Posterior cingulate gyrus (tissue), 11 donors: ENCODE measurements at regions of chr1 and their contacts with region 1.

Region 1: DNA sequence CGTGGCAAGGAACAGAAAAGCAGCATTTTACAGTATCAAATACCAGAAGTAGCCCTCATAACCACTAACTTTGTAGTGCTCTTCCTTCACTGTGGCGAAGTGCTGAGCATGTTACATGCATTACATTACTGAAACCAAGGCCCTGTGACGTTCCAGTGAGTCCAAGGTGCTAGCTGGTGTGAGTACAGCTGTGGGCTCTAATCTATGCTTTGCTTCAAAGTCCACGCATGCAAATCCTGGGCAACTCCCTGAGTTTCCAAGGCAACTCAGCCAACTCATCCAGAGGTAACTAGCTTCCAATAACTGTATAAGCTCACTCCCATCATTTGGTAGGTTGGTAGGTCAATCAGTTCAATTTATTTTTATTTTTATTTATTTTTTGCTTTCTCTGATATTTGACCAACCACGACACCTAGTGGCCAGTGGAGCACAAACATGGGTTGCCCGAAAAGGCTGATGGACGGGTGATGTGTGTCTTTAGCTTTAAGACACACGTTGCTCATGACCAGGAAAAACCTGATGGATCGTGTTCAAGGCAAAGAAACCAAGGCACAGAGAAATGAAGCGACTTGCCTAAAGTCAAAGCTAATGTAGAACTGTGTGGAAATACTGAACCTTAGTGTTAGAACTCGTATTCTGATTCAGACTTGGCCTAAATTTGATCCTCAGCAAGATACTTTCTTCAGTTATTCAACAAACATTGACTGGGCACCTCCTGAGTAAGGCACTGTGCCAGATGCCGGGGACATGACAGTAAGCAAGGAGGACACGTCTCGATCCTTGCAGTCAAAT is 73.0 kb downstream of the GNG12 start:
- DNase-seq: peak in 7 of 10 donors; percentile 40 to 85 (median 55)

Region 2: DNA sequence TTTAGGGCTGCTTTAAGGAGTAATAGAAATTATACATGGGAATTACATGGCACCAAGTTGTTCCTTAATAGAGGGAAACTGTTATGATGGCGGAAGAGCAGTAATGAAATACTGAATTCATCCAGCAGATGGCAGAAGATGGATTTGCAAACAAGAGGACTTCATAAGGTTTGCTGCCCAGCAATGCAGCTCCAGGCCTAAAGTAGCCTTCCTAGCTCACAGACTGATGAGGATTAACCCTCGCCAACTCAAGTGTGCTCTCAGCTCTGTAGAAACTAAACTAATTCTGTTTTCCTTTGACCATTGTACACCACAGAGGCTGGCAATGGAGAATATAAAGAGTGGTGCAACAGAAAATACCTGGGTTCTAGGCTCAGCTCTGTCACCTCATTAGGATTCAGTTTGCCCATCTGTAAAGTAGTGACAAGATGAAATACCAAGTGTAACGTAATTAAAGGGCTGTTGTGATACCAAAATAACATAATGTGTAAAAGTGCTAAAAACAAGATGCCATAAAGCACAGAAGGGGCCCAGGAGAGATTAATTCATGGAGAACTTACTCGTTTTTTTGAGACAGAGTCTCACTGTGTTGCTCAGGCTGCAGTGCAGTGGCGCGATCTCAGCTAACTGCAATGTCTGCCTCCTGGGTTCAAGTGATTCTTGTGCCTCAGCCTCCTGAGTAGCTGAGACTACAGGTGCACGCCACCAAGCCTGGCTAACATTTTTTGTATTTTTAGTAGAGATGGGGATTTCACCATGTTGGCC is 227.6 kb before region 1 on chr1:
- intact Hi-C with region 1: loop called (anchors 1 kb)
- DNase-seq: peak in 5 of 10 donors; percentile 7 to 83 (median 28)

Region 3: GRCh38 chr1:67561704-67562113 is 198.5 kb before region 1 on chr1:
- intact Hi-C with region 1: no loop called
- DNase-seq: peak; percentile 50 to 94 (median 77)

Region 4: GRCh38 chr1:67685067-67685557 is 75.1 kb before region 1 on chr1 and contains the start of gene GADD45A:
- intact Hi-C with region 1: loop called (anchors 2 kb)
- DNase-seq: peak; percentile 94 to 99 (median 97)

Region 5: DNA sequence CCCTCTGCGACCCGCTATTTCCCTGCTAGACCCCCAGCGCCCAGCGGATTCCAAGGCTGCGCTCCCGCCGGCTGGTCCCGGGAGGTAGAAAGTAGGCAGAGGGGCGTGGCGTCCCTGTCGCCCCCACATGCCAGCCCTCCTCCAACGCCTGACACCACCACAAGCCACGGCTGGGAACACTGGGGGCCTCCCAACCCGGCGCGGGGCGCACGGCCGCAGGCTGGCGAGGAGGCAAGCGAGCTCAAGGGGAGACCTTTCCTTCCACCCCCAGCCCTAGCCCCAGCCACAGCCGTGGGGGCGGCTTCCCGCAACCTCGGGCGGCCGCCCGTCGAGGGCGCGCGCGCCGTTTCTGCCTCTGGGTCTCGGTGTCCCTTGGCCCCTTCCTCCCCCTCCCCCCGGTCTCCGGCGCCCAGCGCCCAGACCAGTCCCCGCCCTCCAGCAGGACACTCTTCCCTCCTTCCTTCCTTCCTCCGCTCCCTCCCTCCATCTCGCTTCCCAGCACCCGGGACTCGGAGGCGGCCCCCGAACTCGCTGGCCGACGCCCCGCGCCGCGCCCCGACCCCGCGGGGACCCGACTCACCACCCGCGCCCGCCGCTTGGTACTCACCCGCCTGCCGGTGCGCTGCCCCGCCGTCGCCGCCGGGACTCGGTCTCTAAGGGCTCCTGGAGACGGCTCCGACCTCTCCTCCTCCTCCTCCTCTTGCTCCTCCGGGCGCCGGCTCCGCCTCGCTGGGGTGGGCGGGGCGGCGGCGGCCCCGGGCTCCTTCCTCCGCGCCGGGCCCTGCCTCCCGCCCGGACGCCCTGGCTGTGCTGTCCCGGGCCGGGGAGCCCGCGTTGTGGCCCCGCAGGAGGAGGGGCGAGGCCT is 72.7 kb after region 1 on chr1 and contains the start of gene GNG12:
- intact Hi-C with region 1: loop called (anchors 10 kb)
- DNase-seq: peak in 5 of 10 donors; percentile 29 to 84 (median 73)

Region 6: GRCh38 chr1:68103884-68104554 is 343.8 kb after region 1 on chr1:
- intact Hi-C with region 1: no loop called
- DNase-seq: no peak

Region 7: GRCh38 chr1:68120136-68120791 is 360.0 kb after region 1 on chr1:
- intact Hi-C with region 1: loop called (anchors 10 kb)
- DNase-seq: peak in 1 of 10 donors; percentile 32

Region 8: DNA sequence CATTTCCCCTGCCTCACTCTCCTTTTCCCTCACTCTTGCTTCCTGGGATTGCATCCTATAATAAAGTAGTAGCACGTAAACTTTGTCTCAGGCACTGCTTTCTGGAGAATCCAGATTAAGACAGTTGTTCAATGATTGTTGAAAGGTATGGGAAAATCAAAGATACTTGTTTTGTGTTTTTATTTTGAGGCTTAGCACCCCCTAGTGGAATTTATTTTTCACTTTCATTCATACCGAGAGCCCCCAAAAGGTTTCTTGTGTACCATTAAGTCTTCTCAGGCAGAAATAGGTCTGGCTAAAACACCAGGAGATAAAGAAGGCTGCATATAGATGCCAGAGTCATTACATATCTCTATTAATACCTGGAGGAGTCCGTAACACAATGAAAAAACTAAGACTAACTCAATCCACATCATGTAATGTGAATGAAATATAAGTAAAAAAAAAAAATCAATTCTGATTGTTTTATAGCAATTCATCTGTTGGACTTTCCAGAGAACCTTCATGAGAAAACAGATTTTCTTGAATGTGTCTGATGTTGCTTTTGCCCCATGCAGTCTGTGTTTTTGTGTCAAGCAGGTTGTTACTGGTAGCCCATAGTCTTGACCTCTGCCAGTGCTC is 586.1 kb after region 1 on chr1:
- intact Hi-C with region 1: loop called (anchors 10 kb)
- DNase-seq: no peak